ENCODE measurements at regions of chr19 and their contacts with region 1.

Region 1: GRCh38 chr19:2578901-2579677 is 103.2 kb downstream of the GADD45B start:
- DNase-seq: peak; percentile 85 to 91 (median 88)
- H3K4me3 ChIP-seq: peak overlapping the region; percentile 38
- H3K27ac ChIP-seq: peak overlapping the region; percentile 45 to 57
- H3K4me1 ChIP-seq: peaks cover 18% of the 10 kb centered on the region
- H3K27me3 ChIP-seq: no peaks in the 10 kb centered on the region
- CTCF ChIP-seq: peak; percentile 91 to 97 (median 97)
- EP300 ChIP-seq: peak; percentile 53
- POLR2A ChIP-seq: no peak

Region 2: DNA sequence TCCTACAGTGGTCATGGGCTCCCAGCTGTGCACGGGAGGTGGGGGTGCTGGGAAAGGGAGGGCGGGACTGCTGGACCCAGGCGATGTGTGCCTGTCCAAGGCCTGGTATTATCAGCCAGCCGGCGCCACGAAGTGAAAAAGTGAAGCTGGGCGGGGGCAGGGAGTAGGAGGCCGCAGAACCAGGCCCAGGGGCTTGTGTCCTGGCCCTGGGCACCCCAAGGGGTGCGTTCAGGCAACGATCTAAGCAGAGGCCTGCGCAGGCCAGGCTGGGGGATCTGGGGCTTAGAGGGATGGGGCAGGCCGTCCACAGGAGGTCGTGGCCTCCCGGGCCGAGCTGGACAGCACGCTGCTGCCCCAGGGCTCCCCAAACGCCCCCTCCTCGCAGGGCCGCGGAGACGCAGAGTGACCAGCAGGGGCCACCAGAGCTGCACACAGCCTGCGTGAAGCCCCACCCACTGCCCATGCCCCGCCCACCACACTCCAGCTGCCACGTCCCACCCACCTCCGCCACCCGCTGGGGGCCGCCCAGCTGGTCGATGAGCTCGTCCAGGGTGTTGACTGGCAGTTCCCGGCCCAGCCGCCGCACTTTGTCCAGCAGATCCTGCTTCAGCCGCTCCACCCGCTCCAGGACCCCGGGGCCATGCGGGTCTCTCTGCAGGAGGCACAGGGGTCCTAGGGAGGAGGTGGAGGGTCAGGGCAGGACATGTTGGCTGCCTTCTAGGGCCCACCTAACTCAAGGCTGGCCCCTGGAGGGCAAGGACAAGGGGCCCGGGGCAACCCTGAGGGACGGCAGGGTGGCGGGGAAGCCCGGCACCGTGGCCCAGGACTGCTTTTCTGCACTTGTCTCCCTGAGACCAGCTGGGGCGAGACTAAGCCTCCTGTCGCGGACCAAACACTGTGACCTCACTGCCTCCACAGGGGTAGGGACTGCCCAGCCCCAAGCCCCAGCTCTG is 1465.8 kb before region 1 on chr19:
- intact Hi-C with region 1: no loop called
- DNase-seq: peak; percentile 97 to 98 (median 98)
- H3K4me3 ChIP-seq: no peak overlapping the region
- H3K27ac ChIP-seq: peak overlapping the region; percentile 77 to 90
- H3K4me1 ChIP-seq: peaks cover 15% of the 10 kb centered on the region
- H3K27me3 ChIP-seq: no peaks in the 10 kb centered on the region
- CTCF ChIP-seq: peak; percentile 94 to 95 (median 95)
- EP300 ChIP-seq: no peak
- POLR2A ChIP-seq: no peak

Region 3: GRCh38 chr19:2475702-2476450 is 103.2 kb before region 1 on chr19 and contains the start of gene GADD45B:
- intact Hi-C with region 1: loop called in 2 of 4 experiments (anchors 1 to 2 kb)
- DNase-seq: peak; percentile 98 to 99 (median 99)
- H3K4me3 ChIP-seq: peak within 1 kb of the TSS; percentile 86
- H3K27ac ChIP-seq: peak within 1 kb of the TSS; percentile 62 to 73
- H3K4me1 ChIP-seq: peaks cover 7% of the 10 kb centered on the region
- H3K27me3 ChIP-seq: no peaks in the 10 kb centered on the region
- CTCF ChIP-seq: peak in 1 of 3 donors; percentile 39
- EP300 ChIP-seq: peak; percentile 86
- POLR2A ChIP-seq: peak; percentile 100
- total RNA-seq, gene GADD45B: 47.0 to 414 (median 73.9) TPM

Region 4: DNA sequence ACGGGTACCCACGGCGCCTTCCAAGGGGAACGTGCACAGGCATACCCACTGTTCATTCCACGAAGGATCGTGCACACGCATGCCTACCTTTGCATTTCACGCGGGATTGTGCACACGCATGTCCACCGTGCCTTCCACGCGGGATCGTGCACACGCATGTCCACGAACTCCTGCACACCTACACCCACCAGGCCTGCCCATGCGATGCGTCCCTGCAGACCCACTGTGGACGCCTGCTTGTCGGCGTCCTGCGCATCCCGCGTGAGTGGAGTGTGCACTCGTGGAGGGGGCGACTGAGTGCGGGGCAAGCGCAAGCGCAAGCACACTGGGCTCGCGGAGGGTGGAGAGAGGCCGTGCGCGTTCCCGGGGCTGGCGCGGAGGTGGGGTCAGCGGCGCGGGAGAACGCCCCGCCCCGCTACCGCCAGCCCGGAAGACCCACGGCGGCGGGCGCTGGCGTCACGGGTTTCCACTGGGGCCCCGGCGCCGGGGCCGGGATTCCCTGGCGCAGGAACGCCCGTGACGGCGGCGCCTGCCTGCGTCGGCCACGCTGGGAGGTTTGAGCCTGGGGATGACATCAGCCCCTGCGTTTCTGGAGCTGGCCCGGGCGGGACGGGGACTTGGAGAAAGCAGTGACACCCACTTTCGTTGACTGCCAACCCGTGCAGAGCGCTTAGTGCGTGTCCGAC is 84.5 kb before region 1 on chr19:
- intact Hi-C with region 1: loop called in 1 of 4 experiments (anchors 5 kb)
- DNase-seq: peak; percentile 65 to 82 (median 76)
- H3K4me3 ChIP-seq: peak overlapping the region; percentile 51
- H3K27ac ChIP-seq: no peak overlapping the region
- H3K4me1 ChIP-seq: peaks cover 11% of the 10 kb centered on the region
- H3K27me3 ChIP-seq: no peaks in the 10 kb centered on the region
- CTCF ChIP-seq: no peak
- EP300 ChIP-seq: no peak
- POLR2A ChIP-seq: no peak

Region 5: GRCh38 chr19:2543463-2544442 is 35.3 kb before region 1 on chr19:
- intact Hi-C with region 1: loop called in 1 of 4 experiments (anchors 5 kb)
- DNase-seq: peak; percentile 90 to 94 (median 93)
- H3K4me3 ChIP-seq: no peak overlapping the region
- H3K27ac ChIP-seq: peak overlapping the region; percentile 70 to 81
- H3K4me1 ChIP-seq: peaks cover 12% of the 10 kb centered on the region
- H3K27me3 ChIP-seq: no peaks in the 10 kb centered on the region
- CTCF ChIP-seq: peak in 1 of 3 donors; percentile 16
- EP300 ChIP-seq: peak; percentile 92
- POLR2A ChIP-seq: peak; percentile 27

Region 6: DNA sequence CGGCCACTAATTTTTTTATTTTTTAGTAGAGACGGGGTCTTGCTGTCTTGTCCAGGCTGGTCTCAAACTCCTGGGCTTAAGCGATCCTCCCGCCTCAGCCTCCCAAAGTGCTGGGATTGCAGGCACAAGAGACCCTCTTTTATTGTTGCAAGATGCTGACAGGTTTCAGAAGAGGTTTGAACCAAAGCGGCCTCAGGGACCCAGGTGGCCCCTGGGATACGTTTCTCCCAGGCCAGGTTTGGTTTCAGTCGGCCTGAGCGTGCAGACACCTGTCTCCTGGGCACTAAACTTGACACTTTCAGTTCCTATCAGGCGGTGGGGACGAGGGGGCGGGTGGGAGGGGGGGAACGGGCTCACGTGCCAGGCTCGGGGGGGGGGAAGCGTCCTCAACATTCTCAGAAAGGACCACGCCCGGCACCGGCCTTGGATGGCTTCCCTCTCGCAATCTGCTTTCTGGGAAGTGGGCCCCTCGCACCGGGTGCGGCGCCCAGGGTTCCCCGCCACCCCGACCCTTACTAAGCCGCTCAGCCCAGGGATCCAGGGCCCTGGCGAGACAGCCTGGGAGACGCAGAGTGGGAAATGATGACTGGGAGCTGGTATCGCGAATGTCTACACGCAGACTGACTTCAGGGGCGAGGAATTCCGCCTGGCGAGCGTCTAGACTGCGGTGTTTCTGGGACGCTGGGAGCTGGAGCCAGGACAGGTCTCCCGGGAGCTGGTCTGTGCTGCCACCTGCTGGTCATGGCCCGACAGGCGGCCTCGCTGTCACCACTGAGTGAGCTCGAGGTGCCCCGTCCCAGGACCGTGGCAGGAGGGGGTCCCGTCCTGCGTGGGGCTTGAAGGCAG is 31.8 kb after region 1 on chr19:
- intact Hi-C with region 1: loop called in 2 of 4 experiments (anchors 5 kb)
- DNase-seq: peak; percentile 91 to 97 (median 95)
- H3K4me3 ChIP-seq: peak overlapping the region; percentile 44
- H3K27ac ChIP-seq: peak overlapping the region in 1 of 2 donors; percentile 48
- H3K4me1 ChIP-seq: no peaks in the 10 kb centered on the region
- H3K27me3 ChIP-seq: no peaks in the 10 kb centered on the region
- CTCF ChIP-seq: peak; percentile 90 to 99 (median 97)
- EP300 ChIP-seq: peak; percentile 61
- POLR2A ChIP-seq: peak; percentile 44

Measured in ovary (tissue), 10 donors.